Activated CD8-positive, alpha-beta T cell treated with anti-CD3 and anti-CD28 coated beads, Interleukin-2, amount 10 ng/mL, durations not matched to agents 7 days and 5 days (primary cell): ENCODE measurements at regions of chr20 and their contacts with region 1.

Region 1: GRCh38 chr20:34111702-34112599 is at the start of gene EIF2S2:
- DNase-seq: peak; percentile 97
- ATAC-seq: peak; percentile 89
- H3K4me3 Mint-ChIP-seq: peak within 1 kb of the TSS; percentile 88
- H3K27ac Mint-ChIP-seq: peak within 1 kb of the TSS; percentile 99
- H3K4me1 Mint-ChIP-seq: peaks cover 40% of the 10 kb centered on the region
- H3K27me3 Mint-ChIP-seq: peaks cover 5% of the 10 kb centered on the region
- total RNA-seq, gene EIF2S2: 94.4 to 94.7 TPM

Region 2: DNA sequence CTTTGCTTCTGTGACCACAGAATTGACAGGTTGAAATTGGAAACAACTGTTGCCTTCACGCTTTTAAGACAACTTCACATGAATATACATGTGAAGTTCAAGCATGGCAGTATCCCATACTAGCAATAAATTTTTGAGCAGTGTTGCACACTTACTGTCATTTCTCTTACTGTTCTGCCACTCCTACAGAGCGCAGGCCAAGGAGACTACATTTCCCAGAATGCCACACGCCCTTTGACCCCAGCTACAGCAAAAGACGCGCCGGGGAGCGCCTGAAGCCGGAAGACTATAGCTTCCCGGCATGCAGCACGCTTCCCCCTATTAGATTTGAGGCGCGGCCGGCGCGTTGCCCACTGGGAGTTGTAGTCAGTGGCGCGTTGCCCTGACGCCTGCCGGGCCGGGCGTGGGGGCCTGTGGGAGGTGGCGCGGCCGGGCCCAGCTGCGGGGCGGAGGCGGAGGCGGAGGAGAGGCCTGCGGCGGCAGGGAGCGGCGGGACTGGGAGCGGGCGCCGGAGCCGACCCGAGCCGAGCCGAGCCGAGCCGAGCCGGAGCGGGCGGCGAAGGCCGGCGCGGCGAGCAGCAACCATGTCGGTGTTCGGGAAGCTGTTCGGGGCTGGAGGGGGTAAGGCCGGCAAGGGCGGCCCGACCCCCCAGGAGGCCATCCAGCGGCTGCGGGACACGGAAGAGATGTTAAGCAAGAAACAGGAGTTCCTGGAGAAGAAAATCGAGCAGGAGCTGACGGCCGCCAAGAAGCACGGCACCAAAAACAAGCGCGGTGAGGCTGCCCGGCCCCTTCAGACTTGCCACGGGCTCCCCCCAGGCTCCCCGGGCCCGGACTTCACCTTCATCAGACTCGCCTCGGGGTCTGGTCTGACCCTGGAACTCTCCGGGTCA is 300.8 kb before region 1 on chr20 and contains the start of gene CHMP4B:
- CTCF ChIA-PET with region 1: no interaction called
- POLR2A ChIA-PET with region 1: interaction called, 11 read pairs
- DNase-seq: peak; percentile 99
- ATAC-seq: peak; percentile 98
- H3K4me3 Mint-ChIP-seq: peak within 1 kb of the TSS; percentile 92
- H3K27ac Mint-ChIP-seq: peak within 1 kb of the TSS; percentile 93
- H3K4me1 Mint-ChIP-seq: peaks cover 36% of the 10 kb centered on the region
- H3K27me3 Mint-ChIP-seq: no peaks in the 10 kb centered on the region
- total RNA-seq, gene CHMP4B: 86.7 to 93.2 TPM

Region 3: DNA sequence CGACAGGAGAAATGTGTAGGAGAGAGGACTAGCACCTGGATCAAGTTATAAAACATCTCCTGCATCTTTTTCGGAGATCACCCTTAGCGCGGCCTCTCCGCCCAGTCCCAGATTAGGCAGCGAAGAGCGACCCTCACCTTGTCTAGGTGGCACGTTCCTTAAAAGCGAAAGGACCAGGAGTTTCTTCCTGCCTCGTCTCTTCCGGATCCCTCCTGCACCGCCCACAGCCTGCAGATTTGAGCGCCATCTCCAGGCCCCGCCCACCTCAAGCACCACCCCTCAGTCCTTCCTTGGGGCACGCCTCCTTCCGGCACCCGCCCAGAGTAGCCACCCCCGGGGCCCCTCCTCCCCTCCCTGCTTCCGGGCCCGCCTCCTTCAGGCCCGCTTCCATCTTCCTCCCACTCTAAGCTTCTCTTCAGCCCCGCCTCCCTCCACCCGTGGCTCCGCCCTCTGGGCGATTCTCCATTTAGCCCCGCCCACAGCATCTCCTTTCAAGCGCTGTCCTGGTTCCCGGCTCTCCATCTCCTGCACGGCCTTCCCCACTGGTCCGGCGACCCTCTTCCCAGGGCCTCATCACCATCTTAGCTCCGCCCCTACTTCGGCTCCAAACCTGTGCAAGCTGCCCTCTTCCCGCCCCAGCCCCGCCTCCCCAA is 118.9 kb before region 1 on chr20:
- CTCF ChIA-PET with region 1: interaction called, 5 read pairs
- POLR2A ChIA-PET with region 1: interaction called, 32 read pairs
- DNase-seq: peak; percentile 100
- ATAC-seq: peak; percentile 85
- H3K4me3 Mint-ChIP-seq: peak overlapping the region; percentile 96
- H3K27ac Mint-ChIP-seq: peak overlapping the region; percentile 99
- H3K4me1 Mint-ChIP-seq: peaks cover 51% of the 10 kb centered on the region
- H3K27me3 Mint-ChIP-seq: no peaks in the 10 kb centered on the region

Region 4: GRCh38 chr20:34083137-34083536 is 28.8 kb before region 1 on chr20:
- CTCF ChIA-PET with region 1: no interaction called
- POLR2A ChIA-PET with region 1: interaction called, 11 read pairs
- DNase-seq: no peak
- ATAC-seq: no peak
- H3K4me3 Mint-ChIP-seq: no peak overlapping the region
- H3K27ac Mint-ChIP-seq: peak overlapping the region; percentile 27
- H3K4me1 Mint-ChIP-seq: peaks cover 2% of the 10 kb centered on the region
- H3K27me3 Mint-ChIP-seq: no peaks in the 10 kb centered on the region

Region 5: DNA sequence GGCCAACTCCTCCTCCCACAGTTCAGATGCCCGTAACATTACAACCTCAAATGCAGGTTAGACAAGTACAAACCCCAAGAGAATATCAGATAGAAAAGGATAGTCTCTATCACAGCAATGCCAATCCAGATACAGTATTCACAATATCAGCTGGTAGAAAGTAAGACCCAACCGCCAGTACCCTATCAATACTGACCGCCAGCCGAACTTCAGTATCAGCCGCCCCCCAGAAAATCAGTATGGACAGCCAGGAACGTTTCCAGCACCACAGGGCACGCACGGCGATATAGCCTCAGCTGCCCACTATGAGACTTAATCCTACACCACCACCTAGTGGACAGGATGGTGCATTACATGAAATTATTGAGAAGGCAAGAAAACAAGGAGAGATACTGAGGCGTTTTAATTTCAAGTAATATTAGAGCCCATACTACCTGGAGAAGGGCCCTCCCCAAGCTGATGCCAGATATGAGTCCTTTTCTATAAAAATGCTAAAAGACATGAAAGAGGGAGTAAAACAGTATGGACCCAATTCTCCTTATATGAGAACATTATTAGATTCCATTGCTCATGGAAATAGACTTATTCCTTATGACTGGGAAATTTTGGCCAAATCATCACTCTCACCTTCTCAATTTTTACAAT is 17.7 kb after region 1 on chr20:
- CTCF ChIA-PET with region 1: interaction called, 16 read pairs
- POLR2A ChIA-PET with region 1: interaction called, 10 read pairs
- DNase-seq: peak; percentile 75
- ATAC-seq: peak; percentile 90
- H3K4me3 Mint-ChIP-seq: peak overlapping the region; percentile 8
- H3K27ac Mint-ChIP-seq: no peak overlapping the region
- H3K4me1 Mint-ChIP-seq: peaks cover 8% of the 10 kb centered on the region
- H3K27me3 Mint-ChIP-seq: peaks cover 17% of the 10 kb centered on the region

Region 6: DNA sequence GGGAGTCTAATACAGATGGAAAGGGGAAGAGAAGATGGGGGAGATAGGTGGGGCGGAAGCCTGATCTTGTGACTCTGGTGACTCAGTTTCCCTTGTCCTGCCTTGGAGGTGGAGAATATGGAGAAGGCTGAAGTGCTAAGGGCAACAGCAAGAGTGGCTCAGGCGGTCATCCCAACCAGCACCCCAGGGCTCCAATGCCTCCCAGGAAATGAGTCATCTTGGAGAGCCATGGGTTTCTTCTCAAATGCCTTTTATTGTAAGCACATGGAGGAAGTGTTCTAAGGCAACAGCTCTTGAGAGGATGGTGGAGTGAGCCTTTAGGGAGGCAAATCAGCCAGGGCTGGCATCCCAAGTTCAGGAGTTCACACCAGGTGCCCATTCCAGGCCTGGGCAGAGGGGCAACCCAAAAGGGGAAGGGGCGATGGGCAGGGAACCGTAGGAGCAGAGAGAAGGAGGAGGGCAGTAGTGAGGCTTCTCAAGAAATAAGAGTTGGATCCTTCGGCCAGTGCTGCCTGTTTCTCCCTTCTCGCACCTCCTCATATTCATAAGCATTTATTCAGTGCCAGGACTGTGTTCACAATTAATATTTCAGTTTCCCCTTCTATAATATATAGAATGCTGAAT is 204.4 kb after region 1 on chr20:
- CTCF ChIA-PET with region 1: no interaction called
- POLR2A ChIA-PET with region 1: no interaction called
- DNase-seq: no peak
- ATAC-seq: no peak
- H3K4me3 Mint-ChIP-seq: no peak overlapping the region
- H3K27ac Mint-ChIP-seq: no peak overlapping the region
- H3K4me1 Mint-ChIP-seq: peaks cover 19% of the 10 kb centered on the region
- H3K27me3 Mint-ChIP-seq: peaks cover 22% of the 10 kb centered on the region